Left ventricle myocardium superior (tissue), 1 donor: ENCODE measurements at regions of chr6 and their contacts with region 1.

Region 1: DNA sequence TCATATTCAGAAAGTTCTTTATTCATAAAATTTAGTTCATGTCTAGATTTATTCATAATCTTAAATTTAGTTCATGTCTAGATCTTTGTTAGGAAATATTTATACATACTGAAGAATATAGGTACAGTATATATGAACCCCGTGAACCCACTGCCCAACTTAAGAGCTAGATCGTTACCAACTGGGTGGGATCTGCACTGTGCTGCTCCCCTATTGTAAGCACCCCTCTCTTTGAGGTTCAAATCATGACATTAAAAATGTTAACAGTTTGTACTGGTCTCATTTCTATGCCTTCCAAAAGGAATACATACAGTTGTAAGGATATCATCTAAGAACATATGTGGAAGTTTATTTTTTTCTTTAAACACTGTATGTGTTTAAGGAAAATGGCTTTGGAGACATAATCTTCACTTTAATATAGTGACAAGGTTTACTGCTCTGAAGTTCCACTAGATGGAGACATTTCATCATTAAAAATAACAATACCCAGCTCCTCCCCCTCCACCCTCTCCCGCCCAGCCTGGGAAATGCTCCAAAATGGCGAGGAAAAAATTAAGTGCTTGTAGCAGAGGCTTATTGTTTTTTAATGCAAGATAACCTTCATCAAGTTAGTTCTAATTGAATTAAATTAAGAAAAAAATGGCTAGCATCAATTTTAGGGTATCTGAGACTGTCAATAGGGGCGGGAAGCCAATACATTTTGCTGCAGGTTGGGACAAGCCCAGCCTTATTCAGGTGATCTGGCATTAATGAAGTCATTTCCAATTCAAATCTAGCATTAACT is 104.1 kb upstream of the TRAF3IP2 start:
- DNase-seq: peak; percentile 57
- ATAC-seq: peak; percentile 81

Region 2: GRCh38 chr6:111997078-111997852 is 287.5 kb after region 1 on chr6:
- intact Hi-C with region 1: loop called (anchors 1 kb)
- DNase-seq: peak; percentile 87
- ATAC-seq: peak; percentile 93